Activated CD4-positive, alpha-beta T cell treated with anti-CD3 and anti-CD28 coated beads for 36 hours (primary cell): ENCODE measurements at regions of chr11 and their contacts with region 1.

Region 1: DNA sequence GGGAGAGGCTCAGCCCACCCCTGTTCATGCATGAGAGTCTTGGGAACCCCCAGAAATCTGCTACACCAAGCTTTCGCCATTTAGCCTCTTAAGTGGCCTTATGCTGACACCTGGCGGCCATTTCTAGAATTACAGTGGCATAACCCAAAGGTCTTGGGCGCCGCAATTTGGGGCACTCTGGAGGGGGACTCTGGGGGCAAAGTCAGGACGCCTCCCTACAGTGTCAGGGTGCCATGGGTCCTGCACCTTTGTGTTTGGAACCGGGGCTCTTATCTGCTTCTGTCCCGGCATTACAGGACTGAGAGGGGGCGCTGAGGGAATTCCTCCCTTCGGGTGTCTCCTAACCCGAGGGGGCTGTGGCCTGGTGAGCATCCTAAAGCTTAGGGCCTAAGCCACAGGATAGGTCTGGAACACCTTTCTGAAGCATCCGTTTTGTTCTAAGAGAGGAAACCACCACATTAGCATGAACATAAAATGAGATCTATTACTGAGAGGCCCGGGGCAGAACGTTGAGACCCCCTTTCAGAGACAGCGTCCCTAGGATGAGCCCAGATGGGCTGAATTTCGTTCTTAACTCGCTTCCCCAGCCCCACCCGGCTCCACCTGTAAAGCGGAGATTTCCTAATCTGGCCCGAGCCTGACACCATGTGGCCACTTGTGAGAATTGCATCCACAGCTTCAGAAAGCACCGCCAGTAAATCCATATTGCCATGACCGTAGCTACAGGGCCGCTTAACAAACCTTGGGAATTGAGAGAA is 9.3 kb downstream of the INS start:
- DNase-seq: peak; percentile 89
- ATAC-seq: peak; percentile 71
- H3K4me3 Mint-ChIP-seq: peak overlapping the region; percentile 4
- H3K27ac Mint-ChIP-seq: no peak overlapping the region
- H3K4me1 Mint-ChIP-seq: peaks cover 7% of the 10 kb centered on the region
- H3K27me3 Mint-ChIP-seq: peaks cover 33% of the 10 kb centered on the region

Region 2: DNA sequence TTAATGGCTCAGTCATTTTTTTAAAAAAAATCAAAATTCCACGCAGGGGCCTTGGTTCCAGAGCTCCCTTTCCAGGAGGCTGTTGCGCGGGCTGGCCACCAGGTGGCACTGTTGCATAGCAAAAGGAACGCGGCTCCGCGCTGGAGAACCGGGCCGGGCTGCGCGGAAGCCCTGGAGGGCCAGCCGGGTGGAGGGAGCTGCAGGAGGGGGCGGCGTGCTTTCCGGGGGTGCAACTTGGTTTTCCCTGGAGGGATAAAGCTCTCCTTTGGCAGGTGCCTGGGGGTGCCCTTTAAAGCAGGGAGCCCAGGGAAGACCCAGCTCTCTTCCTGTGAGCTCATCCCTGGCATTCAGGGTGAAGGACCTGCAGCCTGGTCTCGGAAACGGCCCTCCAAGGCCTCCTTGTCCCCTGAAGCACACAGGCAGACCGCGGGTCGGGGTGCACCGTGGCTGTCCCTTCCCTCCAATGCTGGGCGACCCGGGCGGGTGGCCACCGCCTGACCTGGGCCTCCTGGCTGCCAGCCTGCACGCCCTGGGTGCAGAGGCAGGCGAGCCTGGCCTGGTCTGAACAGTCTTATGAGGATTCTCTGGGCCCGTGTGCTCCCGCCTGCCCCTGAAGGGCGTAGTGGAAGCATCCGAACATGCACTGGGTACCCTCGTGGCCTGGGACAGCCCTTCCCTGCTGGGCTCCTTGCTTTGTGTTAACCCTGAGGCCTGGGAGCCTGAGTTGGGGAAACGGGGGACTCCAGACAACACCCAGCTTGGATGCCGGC is 498.7 kb before region 1 on chr11:
- CTCF ChIA-PET with region 1: interaction called, 20 read pairs
- POLR2A ChIA-PET with region 1: no interaction called
- intact Hi-C with region 1: loop called in 1 of 2 experiments (anchors 1 kb)
- DNase-seq: peak; percentile 86
- ATAC-seq: peak; percentile 91
- H3K4me3 Mint-ChIP-seq: no peak overlapping the region
- H3K27ac Mint-ChIP-seq: no peak overlapping the region
- H3K4me1 Mint-ChIP-seq: no peaks in the 10 kb centered on the region
- H3K27me3 Mint-ChIP-seq: peaks cover 3% of the 10 kb centered on the region

Region 3: DNA sequence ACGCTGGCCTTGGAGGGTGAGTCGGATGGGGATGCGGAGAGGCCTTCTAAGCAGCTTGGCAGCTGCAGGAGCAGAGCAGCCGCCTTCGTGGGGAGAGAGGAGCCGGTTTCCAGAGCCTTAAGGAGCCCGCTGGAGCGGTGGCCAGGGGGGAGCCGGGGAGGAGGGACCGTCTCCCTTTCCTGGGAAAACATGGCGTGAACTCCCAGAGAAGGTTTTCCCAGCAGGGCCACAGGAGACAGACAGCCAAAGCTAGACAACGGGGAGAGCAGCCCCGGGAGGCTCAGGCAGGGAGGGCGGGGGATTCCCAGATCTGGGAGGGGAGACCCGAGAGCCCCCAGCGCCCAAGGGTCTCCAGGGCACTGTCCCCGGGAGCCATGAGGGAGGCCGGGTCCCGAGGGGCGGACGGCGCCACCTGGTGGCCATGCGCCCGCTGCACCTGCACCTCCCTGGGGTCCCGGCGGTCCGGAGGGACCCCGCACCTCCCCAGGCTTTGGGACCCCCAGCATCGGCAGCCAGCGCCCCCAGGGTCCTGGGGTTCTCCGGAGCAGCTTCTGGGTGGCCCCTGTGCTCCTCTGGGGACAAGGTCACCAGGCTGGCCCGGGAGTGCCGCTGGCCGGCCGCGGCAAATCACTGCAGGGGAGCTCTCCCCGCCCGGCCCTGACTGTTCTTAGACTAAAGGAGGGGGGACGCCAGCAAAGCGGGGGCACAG is 319.3 kb before region 1 on chr11:
- CTCF ChIA-PET with region 1: interaction called, 33 read pairs
- POLR2A ChIA-PET with region 1: no interaction called
- intact Hi-C with region 1: loop called (anchors 1 to 2 kb)
- DNase-seq: peak; percentile 81
- ATAC-seq: peak; percentile 75
- H3K4me3 Mint-ChIP-seq: no peak overlapping the region
- H3K27ac Mint-ChIP-seq: no peak overlapping the region
- H3K4me1 Mint-ChIP-seq: no peaks in the 10 kb centered on the region
- H3K27me3 Mint-ChIP-seq: no peaks in the 10 kb centered on the region

Region 4: DNA sequence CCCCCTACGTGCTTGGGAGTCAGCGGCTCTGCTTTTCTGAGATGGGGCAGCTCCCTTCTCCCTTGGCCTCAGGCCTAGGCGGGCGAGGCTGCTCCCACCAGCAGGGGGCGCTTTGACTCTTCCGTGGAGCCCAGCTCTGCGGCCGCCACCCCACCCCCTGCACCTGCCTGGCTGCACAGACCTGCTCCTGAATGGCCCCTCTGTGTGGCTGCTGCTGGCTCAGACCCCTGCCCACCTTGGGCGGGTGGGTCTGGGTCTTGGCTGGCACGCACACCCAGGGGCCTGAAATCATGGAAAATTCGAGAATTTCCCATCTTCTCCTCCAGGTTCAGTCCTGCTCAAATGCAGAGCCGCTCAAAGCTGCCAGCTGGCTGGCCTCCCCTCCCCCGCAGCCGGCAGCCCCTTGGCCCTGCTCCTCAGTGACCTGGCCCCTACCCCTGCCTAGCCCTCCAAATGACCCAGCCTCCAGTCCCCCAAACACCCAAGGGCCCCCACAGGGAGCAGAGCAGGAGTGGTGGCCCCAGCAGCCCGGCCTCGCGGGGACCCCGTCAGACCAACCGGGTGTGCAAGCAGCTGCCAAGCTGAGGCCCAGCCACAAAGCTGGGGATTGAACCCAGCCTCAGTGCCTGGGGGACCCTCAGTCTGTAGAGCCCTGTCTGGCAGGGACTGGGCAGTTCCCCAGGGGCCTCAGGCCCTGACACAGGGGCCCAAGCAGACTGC is 269.0 kb before region 1 on chr11:
- CTCF ChIA-PET with region 1: interaction called, 22 read pairs
- POLR2A ChIA-PET with region 1: interaction called, 3 read pairs
- intact Hi-C with region 1: loop called in 1 of 2 experiments (anchors 1 kb)
- DNase-seq: peak; percentile 92
- ATAC-seq: peak; percentile 93
- H3K4me3 Mint-ChIP-seq: no peak overlapping the region
- H3K27ac Mint-ChIP-seq: no peak overlapping the region
- H3K4me1 Mint-ChIP-seq: peaks cover 2% of the 10 kb centered on the region
- H3K27me3 Mint-ChIP-seq: no peaks in the 10 kb centered on the region

Region 5: DNA sequence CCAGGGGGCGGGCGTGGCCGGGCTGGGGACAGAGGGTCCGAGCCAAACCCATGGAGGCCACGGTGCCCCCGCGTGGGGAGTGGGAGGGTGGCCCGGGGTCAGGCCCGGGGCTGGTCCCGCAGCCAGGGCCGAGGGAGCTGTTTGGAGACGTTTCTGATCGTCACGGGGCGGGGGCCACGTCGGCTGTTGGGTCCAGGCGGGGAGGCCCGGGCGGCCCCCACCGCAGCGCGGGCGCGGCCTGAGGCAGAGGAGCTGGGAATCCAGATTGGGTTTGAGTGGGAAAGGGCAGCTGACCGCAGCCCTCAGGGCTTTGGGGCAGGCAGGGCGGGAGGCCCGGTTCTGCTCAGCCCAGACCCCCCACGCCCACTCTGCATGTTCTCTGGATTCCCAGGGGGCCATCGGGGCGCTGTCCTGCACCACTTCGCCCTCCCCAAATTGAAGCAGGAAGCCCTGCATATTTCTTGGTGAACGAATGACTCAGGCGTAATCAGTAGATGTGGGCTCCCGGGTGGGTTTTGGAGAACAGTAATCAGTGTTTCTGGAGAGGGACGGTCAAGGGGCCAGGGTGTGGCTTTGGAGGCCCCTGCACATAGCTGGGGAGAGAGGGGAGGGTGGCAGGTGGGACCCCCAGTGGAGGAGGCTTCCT is 204.0 kb before region 1 on chr11:
- CTCF ChIA-PET with region 1: interaction called, 24 read pairs
- POLR2A ChIA-PET with region 1: no interaction called
- intact Hi-C with region 1: no loop called
- DNase-seq: no peak
- ATAC-seq: peak; percentile 34
- H3K4me3 Mint-ChIP-seq: no peak overlapping the region
- H3K27ac Mint-ChIP-seq: no peak overlapping the region
- H3K4me1 Mint-ChIP-seq: no peaks in the 10 kb centered on the region
- H3K27me3 Mint-ChIP-seq: no peaks in the 10 kb centered on the region

Region 6: GRCh38 chr11:2027708-2028107 is 124.0 kb before region 1 on chr11:
- CTCF ChIA-PET with region 1: interaction called, 11 read pairs
- POLR2A ChIA-PET with region 1: no interaction called
- intact Hi-C with region 1: no loop called
- DNase-seq: no peak
- ATAC-seq: no peak
- H3K4me3 Mint-ChIP-seq: no peak overlapping the region
- H3K27ac Mint-ChIP-seq: no peak overlapping the region
- H3K4me1 Mint-ChIP-seq: no peaks in the 10 kb centered on the region
- H3K27me3 Mint-ChIP-seq: no peaks in the 10 kb centered on the region

Region 7: GRCh38 chr11:2077061-2077802 is 74.4 kb before region 1 on chr11:
- CTCF ChIA-PET with region 1: interaction called, 16 read pairs
- POLR2A ChIA-PET with region 1: interaction called, 4 read pairs
- intact Hi-C with region 1: loop called in 1 of 2 experiments (anchors 2 kb)
- DNase-seq: peak; percentile 77
- ATAC-seq: peak; percentile 93
- H3K4me3 Mint-ChIP-seq: no peak overlapping the region
- H3K27ac Mint-ChIP-seq: peak overlapping the region; percentile 84
- H3K4me1 Mint-ChIP-seq: peaks cover 21% of the 10 kb centered on the region
- H3K27me3 Mint-ChIP-seq: peaks cover 30% of the 10 kb centered on the region